ENCODE measurements at regions of chr10 and their contacts with region 1.

Region 1: DNA sequence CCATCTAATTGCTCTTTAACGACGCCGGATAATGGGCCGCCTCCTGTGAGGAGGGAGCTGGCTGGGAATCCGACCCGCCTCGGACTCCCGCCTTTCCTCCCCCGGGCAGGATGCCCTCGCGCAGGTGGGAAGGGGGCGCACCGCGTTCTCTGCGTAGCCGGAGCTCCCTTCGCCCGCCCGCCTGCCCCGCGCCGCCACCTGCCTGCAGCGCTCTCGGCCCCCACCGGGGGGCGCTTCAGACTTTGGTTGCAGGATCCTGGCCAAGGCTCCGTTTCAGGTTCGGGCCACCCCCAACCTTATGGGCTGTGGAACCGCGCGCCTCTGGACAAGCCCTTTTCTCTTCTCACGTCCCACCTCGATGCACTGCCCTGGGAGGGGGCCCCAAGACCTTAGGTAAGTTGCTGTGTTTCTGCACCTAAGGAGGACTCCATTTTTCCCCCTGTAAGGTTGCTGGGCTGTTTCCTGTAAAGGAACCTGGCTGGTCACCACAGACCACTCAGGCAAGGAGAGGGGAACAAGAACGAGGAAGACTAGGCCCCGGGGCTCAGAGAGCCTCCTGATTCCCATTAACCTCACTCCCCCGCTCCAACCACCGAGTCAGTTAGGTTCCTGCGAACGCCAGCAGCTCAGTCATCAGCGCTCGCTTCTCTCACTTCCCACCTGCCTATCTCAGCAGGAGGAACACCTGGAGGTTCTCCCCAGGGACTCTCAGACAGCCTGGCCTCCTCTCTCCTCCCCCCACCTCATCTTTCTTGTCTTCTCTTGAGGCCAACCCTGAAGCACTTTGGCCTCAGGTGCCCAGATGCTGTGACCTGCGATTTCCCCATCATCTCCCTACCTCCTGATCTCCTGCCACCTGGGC is 11.3 kb upstream of the KAZALD1 start:
- DNase-seq: peak; percentile 49
- H3K4me3 ChIP-seq: no peak overlapping the region
- H3K27ac ChIP-seq: no peak overlapping the region
- H3K4me1 ChIP-seq: no peaks in the 10 kb centered on the region
- H3K27me3 ChIP-seq: peaks cover 36 to 38% of the 10 kb centered on the region in 2 experiments
- CTCF ChIP-seq: peak; percentile 87 to 97
- POLR2A ChIP-seq: no peak

Region 2: DNA sequence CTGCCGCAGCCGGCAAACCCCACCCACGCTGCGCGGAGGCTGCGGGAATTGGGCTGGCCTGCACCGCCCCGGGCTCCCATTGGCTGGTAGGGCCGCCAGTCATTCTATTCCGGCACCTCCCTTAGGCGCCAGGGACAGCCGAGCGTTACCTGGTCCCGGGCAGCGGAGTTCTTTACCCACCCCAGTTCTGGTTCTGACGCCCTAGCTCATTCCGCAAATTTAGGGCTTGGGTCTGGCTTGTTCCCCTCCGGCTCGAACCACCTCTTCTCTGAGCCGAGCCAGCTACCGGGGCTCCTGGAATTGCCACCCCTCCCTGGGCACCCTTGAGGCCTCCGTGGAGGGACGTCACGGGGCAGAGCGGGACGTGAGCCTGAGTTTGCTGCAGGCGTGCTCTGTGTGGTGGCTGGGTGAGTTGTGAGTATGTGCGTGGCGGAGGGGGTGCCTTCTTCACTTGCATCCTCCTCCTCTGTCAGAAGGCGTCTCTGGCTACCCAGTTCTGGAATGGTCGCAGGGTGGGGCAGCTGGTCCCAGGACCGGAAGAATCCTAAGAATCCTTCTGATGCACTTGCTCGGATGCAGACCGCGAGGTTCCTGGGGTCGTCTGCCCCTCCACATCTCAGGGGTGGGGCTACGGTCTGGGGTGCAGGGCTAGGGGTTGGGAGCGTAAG is 19.2 kb before region 1 on chr10 and contains the starts of genes PDZD7 and SFXN3:
- CTCF ChIA-PET with region 1: interaction called, 104 read pairs
- POLR2A ChIA-PET with region 1: no interaction called
- dilution Hi-C with region 1: no loop called
- intact Hi-C with region 1: no loop called
- DNase-seq: peak; percentile 88
- H3K4me3 ChIP-seq: peak within 1 kb of the TSS; percentile 48 to 77 (median 71)
- H3K27ac ChIP-seq: peak within 1 kb of the TSS; percentile 91
- H3K4me1 ChIP-seq: peaks cover 16% of the 10 kb centered on the region
- H3K27me3 ChIP-seq: peaks cover 0 to 9% of the 10 kb centered on the region in 2 experiments
- CTCF ChIP-seq: no peak
- POLR2A ChIP-seq: no peak
- total RNA-seq, gene PDZD7: 0.55 and 1.6 TPM in 2 replicates
- total RNA-seq, gene SFXN3: 79.6 and 83.1 TPM in 2 replicates

Region 3: GRCh38 chr10:101067356-101068083 is 17.1 kb after region 1 on chr10:
- CTCF ChIA-PET with region 1: interaction called, 290 read pairs
- POLR2A ChIA-PET with region 1: no interaction called
- dilution Hi-C with region 1: no loop called
- intact Hi-C with region 1: loop called (anchors 1 kb)
- DNase-seq: peak; percentile 85
- H3K4me3 ChIP-seq: peak overlapping the region; percentile 47 to 60 (median 54)
- H3K27ac ChIP-seq: no peak overlapping the region
- H3K4me1 ChIP-seq: peaks cover 27% of the 10 kb centered on the region
- H3K27me3 ChIP-seq: peaks cover 0 to 1% of the 10 kb centered on the region in 2 experiments
- CTCF ChIP-seq: peak; percentile 78 to 80
- POLR2A ChIP-seq: no peak

Region 4: DNA sequence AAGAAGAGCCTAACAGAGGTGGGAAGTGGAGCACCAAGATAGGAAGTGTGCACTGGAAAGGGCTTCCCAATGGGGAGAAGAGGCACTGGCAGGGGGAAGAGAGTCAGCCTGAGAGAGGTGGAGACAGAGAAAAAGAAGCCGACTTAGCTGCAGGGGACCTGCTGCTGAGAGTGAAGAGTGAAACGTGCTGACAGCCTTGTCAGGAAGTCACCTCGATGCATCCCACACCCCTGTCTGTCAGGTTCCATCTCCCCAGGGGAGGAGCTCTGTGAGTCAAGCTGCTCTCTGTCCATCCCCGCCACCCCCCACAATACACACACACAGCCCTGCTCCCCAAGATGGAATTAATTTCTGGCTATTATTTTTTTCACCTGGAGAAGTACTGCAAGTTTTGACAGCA is 25.3 kb after region 1 on chr10:
- CTCF ChIA-PET with region 1: interaction called, 27 read pairs
- POLR2A ChIA-PET with region 1: interaction called, 5 read pairs
- dilution Hi-C with region 1: no loop called
- intact Hi-C with region 1: no loop called
- DNase-seq: no peak
- H3K4me3 ChIP-seq: no peak overlapping the region
- H3K27ac ChIP-seq: no peak overlapping the region
- H3K4me1 ChIP-seq: no peaks in the 10 kb centered on the region
- H3K27me3 ChIP-seq: peaks cover 15 to 29% of the 10 kb centered on the region in 2 experiments
- CTCF ChIP-seq: no peak
- POLR2A ChIP-seq: no peak

Region 5: GRCh38 chr10:101095542-101096213 is 45.2 kb after region 1 on chr10:
- CTCF ChIA-PET with region 1: interaction called, 21 read pairs
- POLR2A ChIA-PET with region 1: no interaction called
- dilution Hi-C with region 1: no loop called
- intact Hi-C with region 1: no loop called
- DNase-seq: peak; percentile 63
- H3K4me3 ChIP-seq: no peak overlapping the region
- H3K27ac ChIP-seq: no peak overlapping the region
- H3K4me1 ChIP-seq: no peaks in the 10 kb centered on the region
- H3K27me3 ChIP-seq: peaks cover 7% of the 10 kb centered on the region in 2 experiments
- CTCF ChIP-seq: peak; percentile 81 to 87
- POLR2A ChIP-seq: no peak

Measured in endothelial cell of umbilical vein (primary cell).